GM10248 (cell line): ENCODE measurements at regions of chr5 and their contacts with region 1.

Region 1: GRCh38 chr5:154916884-154917283 is 21.1 kb downstream of the GEMIN5 start:
- DNase-seq: no peak
- CTCF ChIP-seq: no peak

Region 2: GRCh38 chr5:154934881-154935280 is 18.0 kb after region 1 on chr5:
- CTCF ChIA-PET with region 1: interaction called, 11 read pairs
- POLR2A ChIA-PET with region 1: no interaction called
- DNase-seq: no peak
- CTCF ChIP-seq: no peak

Region 3: GRCh38 chr5:154945695-154946301 is 28.9 kb after region 1 on chr5:
- CTCF ChIA-PET with region 1: interaction called, 10 read pairs
- POLR2A ChIA-PET with region 1: no interaction called
- DNase-seq: peak; percentile 23
- CTCF ChIP-seq: peak; percentile 47

Region 4: GRCh38 chr5:155114655-155115054 is 197.8 kb after region 1 on chr5:
- CTCF ChIA-PET with region 1: no interaction called
- POLR2A ChIA-PET with region 1: no interaction called
- DNase-seq: no peak
- CTCF ChIP-seq: no peak